Lower lobe of right lung (tissue), 2 donors: ENCODE measurements at regions of chr11 and their contacts with region 1.

Region 1: DNA sequence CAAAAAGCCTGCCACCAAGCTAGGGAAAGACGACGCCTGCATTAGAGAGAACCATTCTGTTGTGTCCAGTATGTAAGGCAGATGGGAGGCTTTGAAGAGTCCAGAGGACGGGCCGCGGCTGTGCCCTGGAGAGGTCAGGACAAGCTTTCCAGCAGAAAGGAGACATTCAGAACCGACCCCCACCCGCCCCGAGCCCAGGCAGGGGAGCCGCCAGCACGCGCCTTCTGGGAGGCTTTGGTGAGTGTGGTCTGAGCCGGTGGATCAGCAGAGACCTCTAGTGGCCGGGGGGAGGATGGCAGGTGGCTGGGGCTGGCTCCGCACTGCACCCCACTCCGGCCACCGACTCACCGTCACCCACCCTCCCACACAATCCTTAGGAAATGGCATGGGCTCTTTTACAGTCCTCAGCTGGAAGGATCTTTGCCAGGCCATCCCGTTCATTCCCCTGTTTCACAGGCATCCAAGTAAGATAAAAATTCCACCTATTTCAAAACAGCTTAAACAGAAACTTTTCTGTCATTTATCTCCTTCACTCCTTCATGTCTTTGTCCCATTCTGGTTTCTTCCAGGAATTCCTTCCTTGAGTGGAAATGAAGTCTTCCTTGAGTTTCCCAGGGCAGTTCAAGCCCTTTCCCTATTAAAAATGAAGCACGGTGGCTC is 91.2 kb downstream of the FEZ1 start:
- DNase-seq: peak; percentile 74
- ATAC-seq: peak; percentile 89 to 90
- H3K4me3 ChIP-seq: no peak overlapping the region
- H3K27ac ChIP-seq: peak overlapping the region; percentile 36
- H3K4me1 ChIP-seq: peaks cover 7% of the 10 kb centered on the region
- H3K27me3 ChIP-seq: peaks cover 24% of the 10 kb centered on the region
- CTCF ChIP-seq: peak; percentile 94

Region 2: GRCh38 chr11:125224391-125225010 is 180.4 kb before region 1 on chr11:
- intact Hi-C with region 1: no loop called
- DNase-seq: no peak
- ATAC-seq: no peak
- H3K4me3 ChIP-seq: no peak overlapping the region
- H3K27ac ChIP-seq: no peak overlapping the region
- H3K4me1 ChIP-seq: peaks cover 12% of the 10 kb centered on the region
- H3K27me3 ChIP-seq: no peaks in the 10 kb centered on the region
- CTCF ChIP-seq: no peak

Region 3: GRCh38 chr11:125315077-125315740 is 89.7 kb before region 1 on chr11:
- intact Hi-C with region 1: no loop called
- DNase-seq: no peak
- ATAC-seq: peak; percentile 15 to 28
- H3K4me3 ChIP-seq: no peak overlapping the region
- H3K27ac ChIP-seq: no peak overlapping the region
- H3K4me1 ChIP-seq: no peaks in the 10 kb centered on the region
- H3K27me3 ChIP-seq: no peaks in the 10 kb centered on the region
- CTCF ChIP-seq: no peak

Region 4: GRCh38 chr11:125345421-125346178 is 59.3 kb before region 1 on chr11:
- intact Hi-C with region 1: loop called (anchors 10 kb)
- DNase-seq: peak; percentile 63
- ATAC-seq: peak; percentile 69 to 74
- H3K4me3 ChIP-seq: no peak overlapping the region
- H3K27ac ChIP-seq: peak overlapping the region; percentile 36
- H3K4me1 ChIP-seq: peaks cover 6% of the 10 kb centered on the region
- H3K27me3 ChIP-seq: no peaks in the 10 kb centered on the region
- CTCF ChIP-seq: peak; percentile 81

Region 5: GRCh38 chr11:125464270-125464662 is 59.4 kb after region 1 on chr11:
- intact Hi-C with region 1: no loop called
- DNase-seq: no peak
- ATAC-seq: no peak
- H3K4me3 ChIP-seq: no peak overlapping the region
- H3K27ac ChIP-seq: no peak overlapping the region
- H3K4me1 ChIP-seq: no peaks in the 10 kb centered on the region
- H3K27me3 ChIP-seq: no peaks in the 10 kb centered on the region
- CTCF ChIP-seq: no peak